ENCODE measurements at regions of chr10 and their contacts with region 1.

Region 1: GRCh38 chr10:21533467-21534279 is at the start of gene MLLT10:
- DNase-seq: peak; percentile 95
- ATAC-seq: peak; percentile 87
- H3K4me3 Mint-ChIP-seq: peak within 1 kb of the TSS; percentile 95
- H3K27ac Mint-ChIP-seq: peak within 1 kb of the TSS; percentile 98
- H3K4me1 Mint-ChIP-seq: peaks cover 18% of the 10 kb centered on the region
- H3K27me3 Mint-ChIP-seq: no peaks in the 10 kb centered on the region
- total RNA-seq, gene MLLT10: 33.8 to 34.1 TPM

Region 2: DNA sequence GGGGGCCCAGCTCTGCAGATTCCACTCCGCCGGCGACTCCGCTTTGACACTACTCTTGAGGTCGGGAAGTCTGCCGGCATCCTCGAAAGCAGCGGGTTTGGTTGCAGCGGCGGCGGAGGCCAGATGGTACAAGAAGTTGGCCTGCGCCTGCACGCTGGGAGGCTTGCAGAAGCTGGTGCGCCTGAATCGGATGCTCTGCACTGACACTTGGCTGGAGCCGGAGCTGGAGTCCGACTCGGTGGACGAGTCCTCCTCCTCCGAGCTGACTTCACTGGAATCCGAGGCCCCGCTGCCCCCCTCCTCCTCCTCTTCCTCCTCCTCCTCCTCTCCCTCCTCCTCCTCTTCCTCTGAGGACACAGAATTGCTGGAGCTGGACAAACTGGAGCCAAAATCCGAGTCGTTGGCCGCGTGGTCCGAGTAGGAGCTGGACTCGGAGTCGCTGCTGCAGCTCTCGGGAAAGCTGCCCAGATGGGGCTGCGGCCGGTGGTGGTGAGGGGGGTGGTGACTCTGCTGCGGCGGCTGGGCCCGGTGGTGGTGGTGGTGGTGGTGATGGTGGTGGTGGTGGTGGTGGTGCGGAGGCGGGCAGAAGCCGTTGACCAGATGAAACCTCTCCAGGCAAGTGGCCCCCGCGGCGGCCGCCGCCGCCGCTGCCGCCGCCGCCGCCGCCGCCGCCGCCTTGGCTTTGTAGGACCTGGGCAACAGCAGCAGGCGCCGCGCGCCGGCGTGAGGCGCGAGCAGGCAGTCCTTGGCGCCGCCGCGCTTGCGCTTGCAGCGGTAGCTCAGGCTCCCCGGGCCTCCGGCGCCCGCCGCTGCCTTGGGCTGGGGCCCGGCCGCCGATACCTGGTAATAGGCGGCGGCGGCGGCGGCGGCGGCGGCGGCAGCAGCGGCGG is 17.2 kb before region 1 on chr10:
- CTCF ChIA-PET with region 1: interaction called, 6 read pairs
- POLR2A ChIA-PET with region 1: no interaction called
- intact Hi-C with region 1: loop called (anchors 1 to 2 kb)
- DNase-seq: peak; percentile 75
- ATAC-seq: peak; percentile 71
- H3K4me3 Mint-ChIP-seq: peak overlapping the region; percentile 78
- H3K27ac Mint-ChIP-seq: no peak overlapping the region
- H3K4me1 Mint-ChIP-seq: peaks cover 34% of the 10 kb centered on the region
- H3K27me3 Mint-ChIP-seq: peaks cover 68% of the 10 kb centered on the region

Region 3: DNA sequence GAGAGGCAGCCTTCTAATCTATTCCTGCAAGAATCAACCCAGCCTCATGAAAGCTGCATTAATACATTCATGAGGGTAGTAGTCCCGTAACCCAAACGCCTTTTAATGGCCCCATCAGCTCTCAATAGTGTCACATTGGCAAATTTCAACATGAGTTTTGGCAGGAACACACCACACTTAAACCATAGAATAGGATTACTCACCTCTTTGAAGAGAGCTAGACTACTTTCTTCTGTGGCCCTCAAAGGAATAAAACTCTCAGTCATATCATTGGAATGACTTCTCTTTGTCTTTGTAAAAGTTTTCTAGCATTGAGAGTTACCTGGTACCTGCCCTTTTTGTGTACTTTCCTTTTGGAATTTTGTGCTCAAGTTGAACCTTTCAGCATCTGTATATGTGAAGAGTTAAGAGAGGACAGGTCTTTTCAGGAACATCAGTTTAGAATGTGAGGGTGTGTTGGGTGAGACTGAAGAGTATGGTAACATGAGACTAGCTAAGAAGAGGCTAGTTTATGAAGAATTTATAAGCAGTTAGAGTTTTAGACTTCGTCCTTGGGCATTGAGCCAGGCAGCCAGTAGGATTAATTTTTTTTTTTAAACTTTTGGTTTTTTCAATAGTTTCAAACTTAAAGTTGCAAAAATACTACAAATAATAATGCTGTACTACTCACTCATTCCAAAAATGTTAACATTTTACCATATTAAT is 92.9 kb after region 1 on chr10:
- CTCF ChIA-PET with region 1: no interaction called
- POLR2A ChIA-PET with region 1: no interaction called
- intact Hi-C with region 1: no loop called
- DNase-seq: no peak
- ATAC-seq: peak; percentile 55
- H3K4me3 Mint-ChIP-seq: no peak overlapping the region
- H3K27ac Mint-ChIP-seq: no peak overlapping the region
- H3K4me1 Mint-ChIP-seq: peaks cover 17% of the 10 kb centered on the region
- H3K27me3 Mint-ChIP-seq: no peaks in the 10 kb centered on the region

Measured in activated CD4-positive, alpha-beta T cell treated with anti-CD3 and anti-CD28 coated beads for 36 hours (primary cell).